ENCODE measurements at regions of chr7 and their contacts with region 1.

Region 1: GRCh38 chr7:158818325-158819213 is 10.7 kb downstream of the ESYT2 start:
- DNase-seq: peak; percentile 78
- H3K4me3 Mint-ChIP-seq: peak overlapping the region; percentile 85
- H3K27ac Mint-ChIP-seq: peak overlapping the region; percentile 100
- H3K4me1 Mint-ChIP-seq: peaks cover 88% of the 10 kb centered on the region
- H3K27me3 Mint-ChIP-seq: no peaks in the 10 kb centered on the region

Region 2: GRCh38 chr7:158407581-158408317 is 410.8 kb before region 1 on chr7:
- intact Hi-C with region 1: no loop called
- DNase-seq: no peak
- H3K4me3 Mint-ChIP-seq: no peak overlapping the region
- H3K27ac Mint-ChIP-seq: no peak overlapping the region
- H3K4me1 Mint-ChIP-seq: no peaks in the 10 kb centered on the region
- H3K27me3 Mint-ChIP-seq: no peaks in the 10 kb centered on the region

Region 3: DNA sequence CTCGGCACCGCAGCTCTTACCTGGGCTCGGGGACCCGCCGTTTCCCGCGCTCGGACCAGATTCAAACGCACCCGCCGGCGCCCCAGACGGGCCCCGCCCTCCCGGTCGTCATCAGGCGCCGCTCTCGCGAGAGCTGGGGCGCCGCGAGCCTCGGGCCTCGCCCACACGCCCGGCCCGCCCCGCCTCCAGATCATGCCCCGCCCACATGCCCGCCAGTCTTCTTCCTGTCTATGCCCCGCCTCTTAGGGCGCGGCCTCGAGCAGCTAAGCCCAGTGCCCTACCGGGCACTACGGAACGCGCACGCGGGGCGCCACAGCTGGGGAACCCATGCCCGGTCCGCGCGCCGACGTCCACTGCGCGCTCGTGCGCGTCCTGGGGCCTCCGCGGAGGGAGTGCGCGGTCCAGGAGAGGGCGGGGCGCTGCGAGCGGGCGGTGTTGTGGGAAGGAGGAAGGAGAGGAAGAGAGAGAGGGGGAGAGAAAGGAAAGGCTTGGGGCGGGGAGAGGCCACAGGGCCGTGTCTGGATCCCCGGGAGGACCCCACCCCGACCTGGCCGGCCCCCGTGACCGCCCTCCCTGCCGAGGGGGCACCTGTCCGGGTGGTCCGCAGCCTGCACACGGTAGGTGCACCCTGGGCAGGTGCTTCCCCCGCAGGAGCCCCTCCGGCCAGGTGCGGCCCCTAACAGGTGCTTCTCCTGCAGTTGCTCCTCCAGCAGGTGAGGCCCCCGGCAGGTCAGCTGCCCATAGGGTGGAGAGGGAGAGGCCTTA is 113.7 kb before region 1 on chr7 and contains the start of gene NCAPG2:
- intact Hi-C with region 1: loop called (anchors 2 kb)
- DNase-seq: peak; percentile 94
- H3K4me3 Mint-ChIP-seq: peak within 1 kb of the TSS; percentile 87
- H3K27ac Mint-ChIP-seq: peak within 1 kb of the TSS; percentile 87
- H3K4me1 Mint-ChIP-seq: peaks cover 52% of the 10 kb centered on the region
- H3K27me3 Mint-ChIP-seq: peaks cover 2% of the 10 kb centered on the region
- total RNA-seq, gene NCAPG2: 76.5 and 86.9 TPM in 2 replicates

Region 4: DNA sequence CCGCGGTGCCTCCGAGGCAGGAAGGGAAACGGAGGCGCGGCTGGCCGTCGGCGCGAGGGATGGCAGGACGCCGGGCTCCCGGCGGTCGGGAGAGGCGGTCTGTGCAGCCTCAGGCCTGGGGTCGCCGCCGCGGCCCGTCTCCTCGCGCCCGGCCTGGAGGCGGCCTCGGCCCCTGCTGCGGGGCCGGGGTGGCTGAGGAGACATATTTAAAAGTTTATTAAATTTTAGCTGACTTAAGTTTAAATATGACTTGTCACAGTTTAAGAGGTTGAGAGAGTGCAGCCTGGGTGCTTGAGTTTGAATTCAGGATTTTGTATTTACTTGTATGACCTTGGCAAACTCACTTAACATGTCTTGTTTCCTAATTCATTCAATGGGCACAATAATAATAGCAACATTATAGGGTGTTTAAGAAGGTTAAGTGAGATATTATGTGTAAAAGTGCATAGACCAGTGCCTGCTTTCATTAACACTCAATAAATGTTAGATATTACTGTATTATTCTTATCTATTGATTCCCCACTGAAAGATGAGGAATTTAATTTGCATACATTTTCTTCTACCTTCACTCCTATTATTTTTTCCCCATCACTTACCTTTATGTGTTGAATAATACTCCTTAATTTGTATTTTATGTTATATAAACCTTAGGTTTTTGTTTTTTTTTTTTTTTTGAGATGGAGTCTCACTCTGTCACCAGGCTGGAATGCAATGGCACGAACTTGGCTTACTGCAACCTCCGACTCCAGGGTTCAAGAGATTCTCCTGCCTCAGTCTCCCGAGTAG is 38.5 kb after region 1 on chr7:
- intact Hi-C with region 1: loop called (anchors 2 kb)
- DNase-seq: no peak
- H3K4me3 Mint-ChIP-seq: peak overlapping the region; percentile 97
- H3K27ac Mint-ChIP-seq: no peak overlapping the region
- H3K4me1 Mint-ChIP-seq: peaks cover 37% of the 10 kb centered on the region
- H3K27me3 Mint-ChIP-seq: peaks cover 2% of the 10 kb centered on the region

Measured in activated T-helper 1 cell treated with anti-CD3 and anti-CD28 coated beads, Interleukin-12 subunit alpha, Interleukin-12 subunit beta, Interleukin-2, Interleukin-4 antibody, amounts not matched to agents 30 ng/mL and 10 ng/mL and 1 ng/mL, durations not matched to agents 14 hours and 24 hours and 36 hours (primary cell).